MCF 10A (cell line): ENCODE measurements at regions of chr6 and their contacts with region 1.

Region 1: DNA sequence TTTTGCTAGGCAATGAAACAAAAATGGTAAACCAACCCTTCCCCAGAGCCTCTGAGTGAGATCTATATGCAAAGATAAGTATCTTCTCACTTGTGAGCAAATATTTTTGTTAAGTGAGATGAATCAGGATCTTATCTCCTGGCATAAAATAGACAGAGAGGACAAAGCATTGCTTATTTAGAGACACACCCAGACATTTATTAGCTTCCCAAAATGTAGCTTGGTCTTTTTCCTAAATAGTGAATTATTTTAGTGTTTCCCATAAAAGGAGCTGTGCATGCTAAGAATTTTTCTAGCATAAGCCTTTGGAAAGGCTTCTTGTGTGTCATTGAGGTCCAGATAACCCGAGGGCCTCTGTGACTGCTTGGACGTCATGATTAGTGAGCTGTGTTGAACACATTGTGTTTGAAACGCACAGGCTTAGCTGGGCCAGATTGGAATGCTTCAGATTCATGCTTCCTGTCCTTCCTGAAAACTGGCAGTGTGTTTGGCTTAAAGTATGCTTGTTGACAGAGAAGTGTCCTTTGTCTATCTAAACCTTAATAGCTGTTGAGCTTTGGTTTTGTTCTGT is 16.5 kb downstream of the MTHFD1L start:
- DNase-seq: peak; percentile 72
- H3K4me3 Mint-ChIP-seq: no peak overlapping the region
- H3K27ac Mint-ChIP-seq: peak overlapping the region; percentile 84
- H3K4me1 Mint-ChIP-seq: peaks cover 19% of the 10 kb centered on the region
- H3K27me3 Mint-ChIP-seq: no peaks in the 10 kb centered on the region
- CTCF ChIP-seq: no peak

Region 2: GRCh38 chr6:150865406-150866146 is 16.4 kb before region 1 on chr6 and contains the start of gene MTHFD1L:
- CTCF ChIA-PET with region 1: interaction called, 9 read pairs
- POLR2A ChIA-PET with region 1: interaction called, 17 read pairs
- intact Hi-C with region 1: no loop called
- DNase-seq: peak; percentile 83
- H3K4me3 Mint-ChIP-seq: peak within 1 kb of the TSS; percentile 98
- H3K27ac Mint-ChIP-seq: peak within 1 kb of the TSS; percentile 90
- H3K4me1 Mint-ChIP-seq: peaks cover 13% of the 10 kb centered on the region
- H3K27me3 Mint-ChIP-seq: no peaks in the 10 kb centered on the region
- CTCF ChIP-seq: peak; percentile 59
- total RNA-seq, gene MTHFD1L: 82.4 and 110 TPM in 2 replicates

Region 3: DNA sequence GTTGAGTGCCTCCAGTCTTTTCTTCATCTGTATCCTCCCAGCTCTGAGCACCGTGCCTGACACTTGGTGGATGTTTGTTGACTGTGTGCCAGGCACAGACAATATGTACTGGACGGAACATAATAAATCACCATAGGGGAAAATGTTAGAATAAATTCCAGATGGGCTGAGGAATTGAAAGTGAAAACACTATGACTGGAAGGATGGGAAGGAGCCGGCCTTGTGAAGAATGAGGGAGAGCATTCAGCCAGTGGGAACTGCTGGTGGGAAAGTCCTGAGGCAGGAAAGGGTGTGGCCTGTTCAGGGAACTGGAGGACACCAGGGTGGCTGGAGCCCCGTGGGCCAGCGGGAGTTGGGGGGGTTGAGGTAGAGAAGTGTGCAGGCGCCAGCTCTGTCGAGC is 58.9 kb after region 1 on chr6:
- CTCF ChIA-PET with region 1: no interaction called
- POLR2A ChIA-PET with region 1: no interaction called
- intact Hi-C with region 1: no loop called
- DNase-seq: no peak
- H3K4me3 Mint-ChIP-seq: no peak overlapping the region
- H3K27ac Mint-ChIP-seq: no peak overlapping the region
- H3K4me1 Mint-ChIP-seq: no peaks in the 10 kb centered on the region
- H3K27me3 Mint-ChIP-seq: no peaks in the 10 kb centered on the region
- CTCF ChIP-seq: no peak